ENCODE measurements at regions of chr2 and their contacts with region 1.

Region 1: GRCh38 chr2:70070541-70071268 is 16.6 kb upstream of the PCBP1 start:
- DNase-seq: peak; percentile 64
- H3K4me3 Mint-ChIP-seq: no peak overlapping the region
- H3K27ac Mint-ChIP-seq: peak overlapping the region; percentile 58
- H3K4me1 Mint-ChIP-seq: peaks cover 8% of the 10 kb centered on the region
- H3K27me3 Mint-ChIP-seq: no peaks in the 10 kb centered on the region
- CTCF ChIP-seq: peak; percentile 78

Region 2: GRCh38 chr2:69914170-69914960 is 156.3 kb before region 1 on chr2:
- CTCF ChIA-PET with region 1: interaction called, 29 read pairs
- intact Hi-C with region 1: loop called (anchors 1 kb)
- DNase-seq: peak; percentile 99
- H3K4me3 Mint-ChIP-seq: peak overlapping the region; percentile 76
- H3K27ac Mint-ChIP-seq: peak overlapping the region; percentile 98
- H3K4me1 Mint-ChIP-seq: peaks cover 27% of the 10 kb centered on the region
- H3K27me3 Mint-ChIP-seq: no peaks in the 10 kb centered on the region
- CTCF ChIP-seq: no peak

Region 3: GRCh38 chr2:69933839-69934613 is 136.7 kb before region 1 on chr2:
- CTCF ChIA-PET with region 1: interaction called, 5 read pairs
- intact Hi-C with region 1: loop called (anchors 5 kb)
- DNase-seq: peak; percentile 20
- H3K4me3 Mint-ChIP-seq: peak overlapping the region; percentile 49
- H3K27ac Mint-ChIP-seq: peak overlapping the region; percentile 93
- H3K4me1 Mint-ChIP-seq: peaks cover 43% of the 10 kb centered on the region
- H3K27me3 Mint-ChIP-seq: no peaks in the 10 kb centered on the region
- CTCF ChIP-seq: no peak

Measured in Calu3 (cell line).